Activated CD4-positive, alpha-beta memory T cell treated with anti-CD3 and anti-CD28 coated beads, Interleukin-2, amount 10 ng/mL, durations not matched to agents 7 days and 5 days (primary cell): ENCODE measurements at regions of chr7 and their contacts with region 1.

Region 1: DNA sequence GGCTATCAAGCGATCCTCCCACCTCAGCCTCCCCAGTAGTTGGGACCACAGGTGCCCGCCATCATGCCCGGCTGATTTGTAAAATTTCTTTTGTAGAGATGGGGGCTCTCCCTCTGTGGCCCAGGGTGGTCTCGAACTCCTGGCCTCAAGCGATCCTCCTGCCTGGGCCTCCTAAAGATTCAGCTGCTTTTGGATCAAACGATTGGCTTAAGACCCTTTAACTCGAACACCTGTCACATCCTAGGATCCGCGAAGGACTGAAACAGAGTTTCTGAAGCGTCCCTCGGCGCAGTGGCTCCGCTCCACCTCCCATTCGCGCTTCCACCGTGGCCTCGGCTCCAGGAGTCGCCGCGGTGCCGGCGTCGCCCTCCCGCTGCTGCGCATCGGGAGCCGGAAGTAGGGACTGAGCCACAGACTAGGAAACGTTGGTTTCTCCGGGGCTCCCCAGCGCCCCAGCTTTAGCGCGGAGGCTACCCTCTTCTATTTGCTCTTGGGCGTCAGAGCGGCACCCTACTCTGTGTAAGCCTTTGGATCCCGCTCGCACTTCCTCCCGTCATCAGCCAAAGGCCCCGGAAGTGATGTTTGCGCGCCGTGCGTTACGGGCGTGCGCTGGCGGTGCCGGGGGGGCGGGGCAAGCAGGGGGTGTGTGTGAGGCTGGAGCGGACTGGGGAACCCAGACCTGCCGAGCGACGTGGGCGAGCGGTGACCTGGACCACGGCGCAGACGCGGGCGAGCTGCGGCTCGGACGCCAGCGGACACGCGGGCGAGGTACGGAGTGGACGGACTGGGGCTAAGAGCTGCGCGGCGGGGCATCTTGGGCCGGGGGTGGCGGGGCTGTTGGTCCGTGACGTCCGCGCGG is 53.0 kb downstream of the KCTD7 start:
- DNase-seq: peak; percentile 94
- H3K4me3 Mint-ChIP-seq: peak overlapping the region; percentile 91
- H3K27ac Mint-ChIP-seq: peak overlapping the region; percentile 89
- H3K4me1 Mint-ChIP-seq: peaks cover 45% of the 10 kb centered on the region
- H3K27me3 Mint-ChIP-seq: no peaks in the 10 kb centered on the region

Region 2: DNA sequence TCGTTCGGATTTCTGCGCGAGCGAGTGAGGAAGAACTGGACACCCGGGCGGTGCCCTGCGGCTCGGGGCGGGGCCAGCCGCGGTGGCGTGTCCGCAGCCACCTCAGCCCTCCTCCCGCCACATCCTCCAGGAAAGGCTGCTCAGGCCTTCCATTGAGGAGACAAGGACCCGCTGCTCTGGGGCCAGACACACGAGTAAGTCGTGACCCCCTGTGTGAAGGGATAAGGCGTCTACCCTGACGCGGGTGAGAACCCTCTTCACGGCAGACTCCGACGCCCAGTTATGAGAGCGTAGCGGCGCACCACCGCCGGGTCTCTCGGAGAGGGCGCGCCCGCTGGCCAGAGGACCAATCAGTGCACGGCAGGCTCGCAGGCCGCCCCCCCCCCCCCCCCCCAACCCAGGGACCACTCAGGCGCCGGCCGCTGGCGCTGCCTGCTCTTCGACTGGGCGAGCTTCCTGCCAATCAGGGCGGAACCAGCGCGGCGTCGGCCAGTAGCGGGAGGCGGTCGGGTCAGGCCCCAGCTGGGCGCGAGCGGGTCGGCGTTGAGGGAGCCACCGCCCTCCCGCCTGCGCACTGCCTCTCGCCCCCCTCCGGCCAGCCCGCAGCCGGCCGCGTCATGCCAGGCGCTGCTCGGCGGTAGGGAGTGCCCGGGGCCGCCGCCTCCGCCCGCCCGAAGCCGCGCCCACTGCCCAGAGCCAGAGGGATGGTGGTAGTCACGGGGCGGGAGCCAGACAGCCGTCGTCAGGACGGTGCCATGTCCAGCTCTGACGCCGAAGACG is 53.2 kb before region 1 on chr7 and contains the start of gene KCTD7:
- CTCF ChIA-PET with region 1: no interaction called
- POLR2A ChIA-PET with region 1: interaction called, 12 read pairs
- DNase-seq: peak; percentile 96
- H3K4me3 Mint-ChIP-seq: peak within 1 kb of the TSS; percentile 82
- H3K27ac Mint-ChIP-seq: peak within 1 kb of the TSS; percentile 94
- H3K4me1 Mint-ChIP-seq: peaks cover 51% of the 10 kb centered on the region
- H3K27me3 Mint-ChIP-seq: no peaks in the 10 kb centered on the region
- total RNA-seq, gene KCTD7: 31.9 to 33.8 TPM

Region 3: GRCh38 chr7:66654123-66654732 is 27.5 kb before region 1 on chr7:
- CTCF ChIA-PET with region 1: no interaction called
- POLR2A ChIA-PET with region 1: interaction called, 18 read pairs
- DNase-seq: peak; percentile 97
- H3K4me3 Mint-ChIP-seq: peak overlapping the region; percentile 94
- H3K27ac Mint-ChIP-seq: peak overlapping the region; percentile 93
- H3K4me1 Mint-ChIP-seq: peaks cover 37% of the 10 kb centered on the region
- H3K27me3 Mint-ChIP-seq: no peaks in the 10 kb centered on the region

Region 4: GRCh38 chr7:66697449-66698438 is 16.0 kb after region 1 on chr7:
- CTCF ChIA-PET with region 1: no interaction called
- POLR2A ChIA-PET with region 1: no interaction called
- DNase-seq: no peak
- H3K4me3 Mint-ChIP-seq: no peak overlapping the region
- H3K27ac Mint-ChIP-seq: no peak overlapping the region
- H3K4me1 Mint-ChIP-seq: no peaks in the 10 kb centered on the region
- H3K27me3 Mint-ChIP-seq: no peaks in the 10 kb centered on the region

Region 5: DNA sequence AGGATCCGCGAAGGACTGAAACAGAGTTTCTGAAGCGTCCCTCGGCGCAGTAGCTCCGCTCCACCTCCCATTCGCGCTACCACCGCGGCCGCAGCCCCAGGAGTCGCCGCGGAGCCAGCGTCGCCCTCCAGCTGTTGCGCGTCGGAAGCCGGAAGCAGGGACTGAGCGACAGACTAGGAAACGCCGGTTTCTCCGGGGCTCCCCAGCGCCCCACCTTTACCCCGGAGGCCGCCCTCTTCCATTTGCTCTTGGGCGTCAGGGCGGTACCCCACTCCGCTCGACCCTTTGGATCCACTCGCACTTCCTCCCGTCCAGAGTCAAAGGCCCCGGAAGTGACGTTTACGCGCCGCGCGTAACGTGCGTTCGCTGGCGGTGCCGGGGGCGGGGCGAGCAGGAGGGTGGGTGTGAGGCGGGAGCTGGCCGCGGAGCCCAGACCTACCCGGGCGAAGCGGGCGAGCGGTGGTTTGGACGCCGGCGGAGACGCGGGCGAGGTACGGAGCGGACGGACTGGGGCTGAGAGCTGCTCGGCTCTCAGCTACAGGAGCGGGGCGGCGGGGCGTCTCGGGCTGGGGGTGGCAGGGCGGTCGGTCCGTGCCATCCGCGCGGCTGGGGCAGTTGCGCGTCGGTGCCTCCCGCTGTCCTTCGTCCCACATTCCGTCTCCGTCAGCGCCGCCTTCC is 58.7 kb after region 1 on chr7 and contains the start of gene RABGEF1:
- CTCF ChIA-PET with region 1: no interaction called
- POLR2A ChIA-PET with region 1: interaction called, 12 read pairs
- DNase-seq: peak; percentile 97
- H3K4me3 Mint-ChIP-seq: peak within 1 kb of the TSS; percentile 93
- H3K27ac Mint-ChIP-seq: peak within 1 kb of the TSS; percentile 96
- H3K4me1 Mint-ChIP-seq: peaks cover 38% of the 10 kb centered on the region
- H3K27me3 Mint-ChIP-seq: no peaks in the 10 kb centered on the region
- total RNA-seq, gene RABGEF1: 22.1 to 24.2 TPM

Region 6: GRCh38 chr7:66804001-66804400 is 122.3 kb after region 1 on chr7:
- CTCF ChIA-PET with region 1: no interaction called
- POLR2A ChIA-PET with region 1: no interaction called
- DNase-seq: no peak
- H3K4me3 Mint-ChIP-seq: no peak overlapping the region
- H3K27ac Mint-ChIP-seq: no peak overlapping the region
- H3K4me1 Mint-ChIP-seq: no peaks in the 10 kb centered on the region
- H3K27me3 Mint-ChIP-seq: no peaks in the 10 kb centered on the region